Activated CD8-positive, alpha-beta T cell treated with anti-CD3 and anti-CD28 coated beads, Interleukin-2, amount 10 ng/mL, durations not matched to agents 7 days and 5 days (primary cell): ENCODE measurements at regions of chr16 and their contacts with region 1.

Region 1: DNA sequence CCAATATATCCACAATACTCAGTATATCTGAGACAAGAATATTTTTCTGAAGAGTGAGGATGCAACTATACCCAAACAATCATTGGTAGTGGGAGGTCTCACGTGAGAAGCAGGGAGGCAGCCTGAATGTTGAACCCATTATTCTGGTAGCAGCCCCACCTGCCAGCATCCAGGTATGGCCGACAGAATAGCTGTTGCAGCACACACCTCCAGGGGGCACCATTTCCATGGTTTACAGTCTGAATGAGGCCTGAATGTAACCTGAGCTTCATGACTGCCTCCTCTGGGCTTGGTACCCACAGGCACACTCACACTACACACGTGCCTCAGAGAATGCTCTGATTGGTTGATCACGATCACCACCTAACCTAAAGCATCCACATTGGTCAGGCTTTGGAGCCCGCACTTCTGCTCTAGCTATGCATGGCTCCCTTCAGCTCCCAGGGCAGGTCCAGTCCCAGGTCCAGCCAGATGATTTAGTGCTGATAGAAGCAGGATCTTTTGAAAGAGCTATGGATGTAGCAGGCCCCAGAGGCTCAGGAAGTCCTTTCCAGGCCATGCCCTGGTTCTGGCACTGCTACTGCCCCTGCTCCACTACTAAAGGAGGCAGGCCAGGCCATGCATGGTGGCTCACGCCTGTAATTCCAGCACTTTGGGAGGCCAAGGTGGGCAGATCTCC is 11.0 kb upstream of the CBFB start:
- DNase-seq: peak; percentile 94
- ATAC-seq: peak; percentile 78
- H3K4me3 Mint-ChIP-seq: no peak overlapping the region
- H3K27ac Mint-ChIP-seq: peak overlapping the region; percentile 54
- H3K4me1 Mint-ChIP-seq: peaks cover 46% of the 10 kb centered on the region
- H3K27me3 Mint-ChIP-seq: no peaks in the 10 kb centered on the region

Region 2: GRCh38 chr16:66382171-66382965 is 635.6 kb before region 1 on chr16:
- CTCF ChIA-PET with region 1: no interaction called
- POLR2A ChIA-PET with region 1: no interaction called
- DNase-seq: no peak
- ATAC-seq: no peak
- H3K4me3 Mint-ChIP-seq: no peak overlapping the region
- H3K27ac Mint-ChIP-seq: no peak overlapping the region
- H3K4me1 Mint-ChIP-seq: no peaks in the 10 kb centered on the region
- H3K27me3 Mint-ChIP-seq: peaks cover 10% of the 10 kb centered on the region

Region 3: GRCh38 chr16:66894948-66895688 is 122.8 kb before region 1 on chr16:
- CTCF ChIA-PET with region 1: interaction called, 13 read pairs
- POLR2A ChIA-PET with region 1: no interaction called
- DNase-seq: peak; percentile 82
- ATAC-seq: peak; percentile 94
- H3K4me3 Mint-ChIP-seq: no peak overlapping the region
- H3K27ac Mint-ChIP-seq: peak overlapping the region; percentile 51
- H3K4me1 Mint-ChIP-seq: peaks cover 22% of the 10 kb centered on the region
- H3K27me3 Mint-ChIP-seq: no peaks in the 10 kb centered on the region

Region 4: DNA sequence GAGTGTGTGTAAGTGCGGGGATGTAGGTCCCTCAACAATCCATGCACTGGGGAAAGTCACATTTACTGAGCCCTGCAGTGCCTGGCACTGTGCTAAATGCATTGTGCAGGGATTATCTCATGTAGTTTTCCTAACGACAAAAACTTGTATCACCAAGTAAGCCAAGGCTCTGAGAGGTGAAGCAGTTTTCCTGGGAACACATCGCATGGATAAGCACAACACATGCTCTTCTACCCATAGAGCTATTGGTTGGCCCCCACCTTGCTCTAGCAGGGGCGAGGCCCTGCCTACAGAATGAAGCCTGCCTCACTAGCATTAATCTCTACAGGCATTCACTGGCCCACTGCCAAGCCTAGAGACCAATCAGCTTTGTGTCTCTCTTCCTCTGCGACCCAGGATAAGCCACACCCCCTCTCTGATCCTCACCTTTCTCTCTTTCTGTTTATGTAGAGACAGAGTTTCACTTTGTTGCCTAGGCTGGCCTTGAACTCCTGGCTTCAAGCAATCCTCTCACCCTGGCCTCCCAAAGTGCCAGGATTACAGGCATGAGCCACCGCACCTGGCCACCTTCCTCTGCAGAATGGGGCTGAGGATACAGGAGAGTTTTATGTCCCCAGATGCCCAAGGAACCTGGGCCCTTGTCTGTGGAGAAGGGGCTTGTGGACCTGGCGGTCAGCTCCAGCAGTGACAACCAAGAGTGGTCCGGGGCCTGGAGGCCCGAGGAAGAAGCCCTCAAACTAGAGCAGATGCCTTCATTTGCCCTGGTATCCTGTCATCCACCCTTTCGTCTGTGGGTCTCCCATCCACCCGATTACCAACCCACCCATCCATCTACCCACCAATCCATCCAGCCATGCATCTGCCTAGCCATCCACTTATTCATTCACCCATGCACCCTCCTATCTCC is 112.1 kb before region 1 on chr16:
- CTCF ChIA-PET with region 1: no interaction called
- POLR2A ChIA-PET with region 1: no interaction called
- DNase-seq: peak; percentile 72
- ATAC-seq: peak; percentile 58
- H3K4me3 Mint-ChIP-seq: no peak overlapping the region
- H3K27ac Mint-ChIP-seq: no peak overlapping the region
- H3K4me1 Mint-ChIP-seq: peaks cover 6% of the 10 kb centered on the region
- H3K27me3 Mint-ChIP-seq: no peaks in the 10 kb centered on the region

Region 5: GRCh38 chr16:66977341-66978113 is 40.4 kb before region 1 on chr16:
- CTCF ChIA-PET with region 1: interaction called, 28 read pairs
- POLR2A ChIA-PET with region 1: interaction called, 15 read pairs
- DNase-seq: peak; percentile 94
- ATAC-seq: peak; percentile 99
- H3K4me3 Mint-ChIP-seq: no peak overlapping the region
- H3K27ac Mint-ChIP-seq: peak overlapping the region; percentile 73
- H3K4me1 Mint-ChIP-seq: peaks cover 60% of the 10 kb centered on the region
- H3K27me3 Mint-ChIP-seq: no peaks in the 10 kb centered on the region

Region 6: DNA sequence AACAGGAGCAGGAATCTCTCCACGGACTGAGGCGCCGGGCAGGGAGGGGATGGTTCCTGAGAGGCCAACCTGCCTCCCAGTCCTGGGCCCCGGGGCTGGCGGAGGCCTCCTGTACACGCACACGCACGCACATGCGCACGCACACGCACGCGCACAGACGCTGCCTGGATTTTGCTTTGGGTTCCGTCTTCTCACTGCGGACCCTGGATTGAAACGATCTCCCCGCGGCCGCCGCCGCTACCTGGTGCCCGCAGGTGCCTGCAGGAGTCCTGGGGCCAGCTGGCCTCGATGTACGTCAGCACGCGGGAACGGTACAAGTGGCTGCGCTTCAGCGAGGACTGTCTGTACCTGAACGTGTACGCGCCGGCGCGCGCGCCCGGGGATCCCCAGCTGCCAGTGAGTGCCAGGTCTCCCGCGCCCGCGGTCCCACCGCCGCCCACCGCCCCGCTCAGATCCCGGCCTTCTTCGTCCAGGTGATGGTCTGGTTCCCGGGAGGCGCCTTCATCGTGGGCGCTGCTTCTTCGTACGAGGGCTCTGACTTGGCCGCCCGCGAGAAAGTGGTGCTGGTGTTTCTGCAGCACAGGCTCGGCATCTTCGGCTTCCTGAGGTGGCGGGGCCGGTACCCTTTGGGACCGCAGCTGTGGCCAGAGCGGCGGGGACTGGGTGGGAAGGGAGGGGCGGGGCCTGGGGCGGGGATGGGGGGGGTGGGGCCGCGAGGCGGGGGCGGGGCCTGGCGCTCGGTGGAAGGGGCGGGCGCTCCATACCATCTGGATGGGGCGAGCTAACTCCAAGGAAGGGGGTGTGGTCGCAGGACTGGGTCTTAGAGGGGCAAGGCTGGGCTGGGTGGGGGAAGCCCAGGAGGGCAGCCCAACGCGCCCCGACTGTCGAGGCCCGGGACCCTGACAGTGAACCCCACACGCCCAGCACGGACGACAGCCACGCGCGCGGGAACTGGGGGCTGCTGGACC is 17.3 kb before region 1 on chr16:
- CTCF ChIA-PET with region 1: interaction called, 14 read pairs
- POLR2A ChIA-PET with region 1: interaction called, 15 read pairs
- DNase-seq: peak; percentile 72
- ATAC-seq: peak; percentile 70
- H3K4me3 Mint-ChIP-seq: peak overlapping the region; percentile 71
- H3K27ac Mint-ChIP-seq: peak overlapping the region; percentile 74
- H3K4me1 Mint-ChIP-seq: peaks cover 37% of the 10 kb centered on the region
- H3K27me3 Mint-ChIP-seq: no peaks in the 10 kb centered on the region

Region 7: DNA sequence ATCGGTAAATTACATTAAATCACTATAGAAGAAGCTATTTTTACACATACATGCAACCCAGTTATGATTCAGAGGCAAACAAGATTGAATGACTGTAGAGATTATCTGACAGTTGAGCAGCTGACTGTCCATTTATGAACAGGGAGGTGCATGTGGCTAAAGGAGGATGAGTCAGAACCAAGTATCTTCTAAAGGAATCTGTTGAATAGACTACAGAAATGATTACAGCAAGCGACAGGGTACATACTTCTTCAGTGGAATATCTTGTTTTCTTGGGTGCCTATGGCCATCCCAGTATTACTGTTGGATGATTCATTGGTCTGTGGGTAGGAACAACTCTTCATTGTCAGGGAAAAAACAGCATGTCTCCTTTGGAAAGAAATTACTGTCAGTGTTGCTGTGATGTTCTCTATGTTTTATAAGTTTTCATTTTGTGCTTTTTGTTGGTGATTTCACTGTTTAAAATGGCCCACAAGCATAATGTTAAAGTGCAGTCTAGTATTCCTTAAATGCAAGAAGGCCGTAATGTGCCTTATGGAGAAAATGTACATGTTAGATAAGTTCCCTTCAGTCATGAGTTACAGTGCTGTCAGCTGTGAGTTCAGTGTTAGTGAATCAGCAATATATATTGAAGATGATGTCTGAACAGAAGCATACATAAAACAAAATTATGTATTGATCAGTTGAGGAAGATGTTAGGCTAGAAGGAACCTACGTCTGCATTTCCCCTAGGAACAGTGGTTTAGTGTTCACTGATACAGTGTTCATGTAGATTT is 38.0 kb after region 1 on chr16:
- CTCF ChIA-PET with region 1: interaction called, 18 read pairs
- POLR2A ChIA-PET with region 1: interaction called, 3 read pairs
- DNase-seq: no peak
- ATAC-seq: no peak
- H3K4me3 Mint-ChIP-seq: no peak overlapping the region
- H3K27ac Mint-ChIP-seq: peak overlapping the region; percentile 61
- H3K4me1 Mint-ChIP-seq: peaks cover 52% of the 10 kb centered on the region
- H3K27me3 Mint-ChIP-seq: no peaks in the 10 kb centered on the region

Region 8: DNA sequence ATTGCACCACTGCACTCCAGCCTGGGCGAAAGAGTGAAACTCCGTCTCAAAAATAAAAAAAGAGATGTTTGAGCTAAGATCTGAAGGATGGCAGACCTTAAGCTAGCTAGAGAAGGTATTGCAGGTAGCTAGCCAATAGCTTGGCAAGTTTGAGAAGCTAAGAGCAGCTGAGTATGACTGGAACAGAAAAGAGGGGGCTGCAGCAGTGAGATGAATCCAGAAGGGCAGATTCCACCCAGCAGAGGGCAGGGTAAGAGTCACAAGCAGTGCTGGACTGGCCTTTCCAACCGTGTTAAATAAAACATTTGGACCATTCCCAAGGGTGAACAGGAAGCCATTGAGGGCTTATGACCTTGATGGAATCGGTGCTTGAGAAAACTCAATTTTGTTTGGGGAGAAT is 86.1 kb after region 1 on chr16:
- CTCF ChIA-PET with region 1: interaction called, 134 read pairs
- POLR2A ChIA-PET with region 1: interaction called, 4 read pairs
- DNase-seq: no peak
- ATAC-seq: no peak
- H3K4me3 Mint-ChIP-seq: no peak overlapping the region
- H3K27ac Mint-ChIP-seq: peak overlapping the region; percentile 35
- H3K4me1 Mint-ChIP-seq: peaks cover 2% of the 10 kb centered on the region
- H3K27me3 Mint-ChIP-seq: no peaks in the 10 kb centered on the region

Region 9: GRCh38 chr16:67159593-67160406 is 141.9 kb after region 1 on chr16 and contains the starts of genes FBXL8 and TRADD:
- CTCF ChIA-PET with region 1: interaction called, 149 read pairs
- POLR2A ChIA-PET with region 1: interaction called, 7 read pairs
- DNase-seq: peak; percentile 86
- ATAC-seq: peak; percentile 73
- H3K4me3 Mint-ChIP-seq: peak within 1 kb of the TSS; percentile 96
- H3K27ac Mint-ChIP-seq: peak within 1 kb of the TSS; percentile 94
- H3K4me1 Mint-ChIP-seq: peaks cover 73% of the 10 kb centered on the region
- H3K27me3 Mint-ChIP-seq: peaks cover 15% of the 10 kb centered on the region
- total RNA-seq, gene FBXL8: 22.7 to 24.8 TPM
- total RNA-seq, gene TRADD: 39.2 to 40.7 TPM